Left cardiac atrium (tissue), 4 donors: ENCODE measurements at regions of chr10 and their contacts with region 1.

Region 1: DNA sequence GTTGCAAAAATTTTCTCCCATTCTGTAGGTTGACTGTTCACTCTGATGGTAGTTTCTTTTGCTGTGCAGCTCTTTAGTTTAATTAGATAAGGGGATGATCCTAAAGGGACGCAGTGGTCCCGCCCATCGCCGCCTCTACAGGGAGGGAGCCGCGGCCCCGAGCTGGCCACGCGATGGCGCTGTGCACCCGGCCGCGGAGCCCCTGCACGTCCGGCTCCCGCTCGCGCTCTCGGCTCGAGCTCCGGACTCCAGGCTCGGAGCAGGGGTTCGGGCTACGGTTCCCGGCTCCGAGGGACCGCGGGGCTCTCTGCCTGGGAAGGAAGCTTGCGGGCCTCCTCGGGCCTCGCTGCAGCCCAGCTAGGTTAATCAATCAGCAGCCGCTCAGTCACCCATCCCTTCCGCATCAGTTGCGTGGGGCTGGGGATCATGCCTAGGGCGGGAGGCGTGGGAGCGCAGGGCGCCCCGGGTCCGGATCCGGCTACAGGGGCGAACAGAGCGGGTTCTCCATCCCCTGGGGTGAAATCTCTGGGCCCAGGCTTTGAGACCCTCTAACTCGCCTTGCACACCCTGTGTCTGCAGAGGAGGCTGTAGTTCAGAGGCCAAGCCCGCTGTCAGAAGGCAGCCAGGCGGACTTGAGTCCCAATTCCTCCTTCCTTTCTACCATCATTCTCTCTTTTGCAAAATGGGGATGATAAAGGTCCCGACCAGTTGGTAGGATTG is 97.9 kb downstream of the WDR11 start:
- DNase-seq: peak; percentile 79
- ATAC-seq: peak; percentile 94

Region 2: GRCh38 chr10:121722665-121723064 is 773.6 kb after region 1 on chr10:
- intact Hi-C with region 1: loop called in 1 of 2 experiments (anchors 10 kb)
- DNase-seq: no peak
- ATAC-seq: no peak

Region 3: DNA sequence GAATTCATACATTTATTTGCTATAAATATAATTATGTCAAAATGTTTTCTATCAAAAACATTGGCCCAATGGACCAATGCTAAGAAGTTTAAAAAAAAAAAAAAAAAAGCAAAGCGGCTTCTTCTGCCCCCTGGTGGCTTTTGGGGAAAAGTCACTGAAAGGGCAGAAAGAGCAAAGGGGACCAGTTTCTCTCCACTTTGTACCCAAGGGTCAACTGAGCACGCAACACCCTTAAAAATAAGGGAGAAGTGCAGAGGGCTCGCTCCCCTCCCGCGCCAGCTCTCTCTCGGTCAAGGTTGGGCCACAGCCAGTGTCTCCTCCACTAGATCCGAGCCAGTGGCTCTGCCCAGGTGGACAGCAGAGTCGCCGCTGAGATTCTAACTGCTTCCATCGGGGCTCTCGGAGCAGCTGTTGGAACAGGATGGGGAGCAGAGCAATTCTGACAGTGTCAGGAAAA is 785.6 kb after region 1 on chr10:
- intact Hi-C with region 1: loop called (anchors 5 to 10 kb)
- DNase-seq: no peak
- ATAC-seq: peak in 1 of 2 donors; percentile 23

Region 4: DNA sequence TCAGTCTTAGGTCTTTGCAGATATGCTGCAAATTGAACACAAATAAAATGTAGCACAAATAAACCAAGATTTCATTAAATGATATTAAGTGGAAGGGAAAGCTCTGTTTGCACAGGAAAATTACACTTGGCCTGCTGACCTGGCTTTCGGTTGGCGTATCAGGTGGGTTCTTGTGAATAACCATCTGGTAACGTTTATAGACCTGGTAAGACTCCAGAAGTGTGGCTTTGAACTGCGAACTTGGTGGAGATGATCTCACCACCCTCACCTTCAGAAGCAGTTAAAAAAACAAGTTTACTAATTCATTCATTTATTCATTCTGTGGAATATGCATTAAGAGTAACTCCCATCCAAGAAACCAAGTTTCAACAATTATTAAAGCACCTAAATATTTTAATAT is 950.7 kb after region 1 on chr10:
- intact Hi-C with region 1: loop called in 1 of 2 experiments (anchors 5 kb)
- DNase-seq: no peak
- ATAC-seq: no peak